Activated naive CD4-positive, alpha-beta T cell treated with anti-CD3 and anti-CD28 coated beads, Interleukin-2, amount 10 ng/mL, durations not matched to agents 7 days and 5 days (primary cell): ENCODE measurements at regions of chr1 and their contacts with region 1.

Region 1: GRCh38 chr1:16055613-16056520 is 12.3 kb downstream of the CLCNKB start:
- DNase-seq: peak; percentile 92
- H3K4me3 Mint-ChIP-seq: no peak overlapping the region
- H3K27ac Mint-ChIP-seq: no peak overlapping the region
- H3K4me1 Mint-ChIP-seq: peaks cover 6% of the 10 kb centered on the region
- H3K27me3 Mint-ChIP-seq: peaks cover 22% of the 10 kb centered on the region

Region 2: GRCh38 chr1:15803354-15803753 is 252.5 kb before region 1 on chr1:
- CTCF ChIA-PET with region 1: interaction called, 13 read pairs
- DNase-seq: peak; percentile 29
- H3K4me3 Mint-ChIP-seq: no peak overlapping the region
- H3K27ac Mint-ChIP-seq: no peak overlapping the region
- H3K4me1 Mint-ChIP-seq: no peaks in the 10 kb centered on the region
- H3K27me3 Mint-ChIP-seq: peaks cover 38% of the 10 kb centered on the region

Region 3: GRCh38 chr1:16009030-16009709 is 46.7 kb before region 1 on chr1:
- CTCF ChIA-PET with region 1: interaction called, 47 read pairs
- DNase-seq: peak; percentile 82
- H3K4me3 Mint-ChIP-seq: no peak overlapping the region
- H3K27ac Mint-ChIP-seq: no peak overlapping the region
- H3K4me1 Mint-ChIP-seq: peaks cover 4% of the 10 kb centered on the region
- H3K27me3 Mint-ChIP-seq: peaks cover 50% of the 10 kb centered on the region

Region 4: GRCh38 chr1:16032388-16033103 is 23.3 kb before region 1 on chr1:
- CTCF ChIA-PET with region 1: no interaction called
- DNase-seq: peak; percentile 60
- H3K4me3 Mint-ChIP-seq: no peak overlapping the region
- H3K27ac Mint-ChIP-seq: no peak overlapping the region
- H3K4me1 Mint-ChIP-seq: peaks cover 2% of the 10 kb centered on the region
- H3K27me3 Mint-ChIP-seq: peaks cover 27% of the 10 kb centered on the region